Lower leg skin (tissue), 4 donors: ENCODE measurements at regions of chr2 and their contacts with region 1.

Region 1: DNA sequence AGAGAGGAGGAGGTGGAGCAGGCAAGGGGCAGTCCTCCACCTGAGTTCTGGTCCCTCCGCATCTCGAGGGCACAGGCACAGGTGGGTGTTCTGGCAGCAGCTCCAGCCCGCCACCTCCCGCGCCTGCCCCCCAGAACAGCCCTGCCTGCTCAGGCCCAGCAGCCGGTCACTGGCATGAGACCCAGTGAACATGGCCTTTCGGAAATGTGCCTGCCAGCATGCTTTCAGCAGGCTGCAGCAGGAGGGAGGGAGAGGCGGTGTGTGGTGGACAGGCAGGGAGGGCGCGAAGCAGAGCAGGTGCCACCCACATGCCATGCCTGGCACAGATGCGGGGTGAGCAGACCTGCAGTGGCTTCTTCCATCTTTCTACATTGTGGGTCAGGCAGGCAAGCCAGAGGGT is 3.4 kb upstream of the OR6B3 start:
- DNase-seq: no peak
- H3K4me3 ChIP-seq: no peak overlapping the region
- CTCF ChIP-seq: no peak
- POLR2A ChIP-seq: no peak

Region 2: GRCh38 chr2:240143801-240144648 is 87.3 kb after region 1 on chr2:
- intact Hi-C with region 1: loop called (anchors 5 kb)
- DNase-seq: peak; percentile 45 to 94
- H3K4me3 ChIP-seq: no peak overlapping the region
- CTCF ChIP-seq: peak in 1 of 3 donors; percentile 86
- POLR2A ChIP-seq: no peak